A673 (cell line): ENCODE measurements at regions of chr7 and their contacts with region 1.

Region 1: DNA sequence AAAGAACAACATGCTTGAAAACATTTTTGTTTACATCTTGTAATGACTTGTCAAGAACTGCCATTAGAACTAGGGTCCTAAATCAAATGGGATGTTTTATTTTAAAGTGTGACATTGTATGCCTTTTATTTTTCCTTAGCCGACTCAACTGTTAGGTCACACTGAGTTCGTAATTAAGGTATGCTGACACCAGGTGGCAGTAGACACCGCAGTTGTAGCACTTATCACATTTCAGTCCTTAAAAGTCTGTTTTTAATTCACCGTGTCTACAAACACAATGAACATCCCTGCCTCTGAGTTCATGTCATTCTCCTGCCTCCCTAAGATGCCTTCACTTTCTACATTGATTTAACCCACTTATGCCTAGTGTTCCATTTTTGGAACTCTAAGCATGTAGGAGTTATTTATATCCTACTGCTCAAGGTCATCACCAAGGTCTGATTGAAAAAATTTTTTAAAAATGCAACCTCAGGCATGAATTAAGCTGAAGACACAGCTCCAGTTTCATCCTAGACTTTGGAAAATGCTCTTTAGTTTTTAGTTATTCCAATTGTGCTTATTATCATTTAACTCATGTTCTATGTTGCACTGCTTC is 186.1 kb downstream of the BMPER start:
- DNase-seq: peak; percentile 78
- H3K4me3 ChIP-seq: no peak overlapping the region
- H3K27ac ChIP-seq: no peak overlapping the region
- H3K4me1 ChIP-seq: peaks cover 20% of the 10 kb centered on the region
- H3K27me3 ChIP-seq: no peaks in the 10 kb centered on the region
- CTCF ChIP-seq: peak; percentile 77

Region 2: DNA sequence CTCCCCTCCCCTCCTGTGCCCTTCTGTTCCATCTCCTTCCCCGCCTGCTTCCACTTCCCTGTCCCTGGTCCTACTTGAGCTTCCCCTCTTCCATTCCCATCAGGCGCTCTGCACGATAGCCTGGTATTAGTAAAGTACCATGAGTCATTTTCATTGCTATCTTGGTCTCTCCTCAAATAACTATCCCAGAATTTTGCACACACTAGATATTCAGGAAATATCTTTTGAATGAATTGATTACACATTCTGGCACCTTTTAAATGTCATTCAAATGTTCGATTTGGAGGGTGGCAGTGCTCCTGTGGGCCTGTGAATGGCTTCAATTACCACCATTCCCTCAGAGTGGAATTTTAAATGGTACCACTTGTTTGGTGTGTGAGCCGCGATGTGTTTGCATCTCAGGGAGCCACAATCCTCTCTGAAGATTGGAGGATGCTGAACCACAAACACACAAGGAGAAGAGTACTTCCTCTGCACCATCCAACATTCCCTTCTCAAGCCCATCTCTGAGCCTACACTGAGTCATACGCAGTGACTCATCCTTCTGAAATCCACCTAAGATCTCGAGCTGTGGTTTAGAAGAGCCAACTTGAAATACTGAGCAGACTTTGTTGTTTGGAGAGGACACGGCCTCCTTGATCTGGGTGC is 104.4 kb before region 1 on chr7:
- CTCF ChIA-PET with region 1: interaction called, 34 read pairs
- POLR2A ChIA-PET with region 1: no interaction called
- intact Hi-C with region 1: loop called (anchors 1 kb)
- DNase-seq: peak; percentile 88
- H3K4me3 ChIP-seq: no peak overlapping the region
- H3K27ac ChIP-seq: peak overlapping the region; percentile 3
- H3K4me1 ChIP-seq: peaks cover 17% of the 10 kb centered on the region
- H3K27me3 ChIP-seq: no peaks in the 10 kb centered on the region
- CTCF ChIP-seq: no peak

Region 3: DNA sequence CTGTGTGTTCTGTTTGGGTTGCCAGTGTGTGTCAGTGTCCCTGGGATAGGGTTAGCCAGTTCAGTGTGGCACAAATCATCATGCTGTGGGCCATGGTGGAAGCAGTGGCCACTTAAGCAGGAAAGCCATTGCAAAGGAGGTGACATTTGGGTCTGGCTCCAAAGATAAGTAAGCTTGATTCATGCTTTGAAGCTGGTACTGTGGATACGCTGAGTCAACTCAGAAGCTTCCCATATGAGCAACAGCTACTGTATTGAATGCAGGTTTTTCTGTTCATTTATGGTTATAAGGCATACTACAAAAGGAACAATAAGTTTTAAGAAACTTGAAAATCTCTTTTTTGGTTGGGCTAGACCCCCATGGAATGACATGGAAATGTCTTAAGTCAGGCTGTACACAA is 43.0 kb before region 1 on chr7:
- CTCF ChIA-PET with region 1: interaction called, 9 read pairs
- POLR2A ChIA-PET with region 1: no interaction called
- intact Hi-C with region 1: loop called (anchors 5 kb)
- DNase-seq: no peak
- H3K4me3 ChIP-seq: no peak overlapping the region
- H3K27ac ChIP-seq: peak overlapping the region; percentile 94
- H3K4me1 ChIP-seq: peaks cover 60% of the 10 kb centered on the region
- H3K27me3 ChIP-seq: no peaks in the 10 kb centered on the region
- CTCF ChIP-seq: no peak

Region 4: GRCh38 chr7:34128762-34129161 is 37.3 kb after region 1 on chr7:
- CTCF ChIA-PET with region 1: no interaction called
- POLR2A ChIA-PET with region 1: no interaction called
- intact Hi-C with region 1: loop called (anchors 1 kb)
- DNase-seq: peak; percentile 90
- H3K4me3 ChIP-seq: no peak overlapping the region
- H3K27ac ChIP-seq: peak overlapping the region; percentile 9
- H3K4me1 ChIP-seq: peaks cover 37% of the 10 kb centered on the region
- H3K27me3 ChIP-seq: no peaks in the 10 kb centered on the region
- CTCF ChIP-seq: no peak

Region 5: GRCh38 chr7:34165929-34166550 is 74.6 kb after region 1 on chr7:
- CTCF ChIA-PET with region 1: no interaction called
- POLR2A ChIA-PET with region 1: no interaction called
- intact Hi-C with region 1: loop called (anchors 2 kb)
- DNase-seq: peak; percentile 54
- H3K4me3 ChIP-seq: no peak overlapping the region
- H3K27ac ChIP-seq: no peak overlapping the region
- H3K4me1 ChIP-seq: peaks cover 14% of the 10 kb centered on the region
- H3K27me3 ChIP-seq: no peaks in the 10 kb centered on the region
- CTCF ChIP-seq: peak; percentile 69

Region 6: DNA sequence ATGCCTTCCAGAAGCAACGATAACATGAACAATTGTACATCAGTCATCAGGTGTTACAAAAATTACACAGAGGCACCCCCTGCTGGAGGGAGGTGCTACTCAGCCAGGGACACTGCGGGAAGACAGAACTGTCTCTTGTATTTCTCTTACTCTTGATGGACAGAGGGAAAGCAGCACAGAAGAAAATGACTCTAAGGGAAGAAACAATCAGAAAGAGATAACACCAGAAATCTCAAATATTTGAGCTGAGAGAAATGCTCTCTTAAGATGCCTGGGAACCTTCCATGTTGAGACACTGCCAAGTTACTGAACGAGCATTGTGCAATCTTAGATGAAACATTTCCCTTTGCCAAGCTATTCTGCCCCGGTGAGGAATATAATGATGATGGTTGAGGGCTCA is 339.0 kb after region 1 on chr7:
- CTCF ChIA-PET with region 1: no interaction called
- POLR2A ChIA-PET with region 1: no interaction called
- intact Hi-C with region 1: loop called (anchors 5 kb)
- DNase-seq: peak; percentile 54
- H3K4me3 ChIP-seq: no peak overlapping the region
- H3K27ac ChIP-seq: no peak overlapping the region
- H3K4me1 ChIP-seq: no peaks in the 10 kb centered on the region
- H3K27me3 ChIP-seq: no peaks in the 10 kb centered on the region
- CTCF ChIP-seq: peak; percentile 66